Ascending aorta (tissue), 2 donors: ENCODE measurements at regions of chr2 and their contacts with region 1.

Region 1: GRCh38 chr2:33210626-33211025 is 263.9 kb downstream of the LTBP1 start:
- DNase-seq: peak; percentile 35 to 89
- H3K4me3 ChIP-seq: no peak overlapping the region
- H3K27ac ChIP-seq: peak overlapping the region; percentile 87 to 95
- H3K4me1 ChIP-seq: peaks cover 17 to 63% of the 10 kb centered on the region in 2 donors
- H3K27me3 ChIP-seq: no peaks in the 10 kb centered on the region
- CTCF ChIP-seq: no peak

Region 2: GRCh38 chr2:33059471-33060156 is 151.0 kb before region 1 on chr2:
- intact Hi-C with region 1: loop called (anchors 5 kb)
- DNase-seq: no peak
- H3K4me3 ChIP-seq: peak overlapping the region; percentile 45 to 53
- H3K27ac ChIP-seq: peak overlapping the region; percentile 70 to 82
- H3K4me1 ChIP-seq: peaks cover 0 to 6% of the 10 kb centered on the region in 2 donors
- H3K27me3 ChIP-seq: no peaks in the 10 kb centered on the region
- CTCF ChIP-seq: no peak

Region 3: DNA sequence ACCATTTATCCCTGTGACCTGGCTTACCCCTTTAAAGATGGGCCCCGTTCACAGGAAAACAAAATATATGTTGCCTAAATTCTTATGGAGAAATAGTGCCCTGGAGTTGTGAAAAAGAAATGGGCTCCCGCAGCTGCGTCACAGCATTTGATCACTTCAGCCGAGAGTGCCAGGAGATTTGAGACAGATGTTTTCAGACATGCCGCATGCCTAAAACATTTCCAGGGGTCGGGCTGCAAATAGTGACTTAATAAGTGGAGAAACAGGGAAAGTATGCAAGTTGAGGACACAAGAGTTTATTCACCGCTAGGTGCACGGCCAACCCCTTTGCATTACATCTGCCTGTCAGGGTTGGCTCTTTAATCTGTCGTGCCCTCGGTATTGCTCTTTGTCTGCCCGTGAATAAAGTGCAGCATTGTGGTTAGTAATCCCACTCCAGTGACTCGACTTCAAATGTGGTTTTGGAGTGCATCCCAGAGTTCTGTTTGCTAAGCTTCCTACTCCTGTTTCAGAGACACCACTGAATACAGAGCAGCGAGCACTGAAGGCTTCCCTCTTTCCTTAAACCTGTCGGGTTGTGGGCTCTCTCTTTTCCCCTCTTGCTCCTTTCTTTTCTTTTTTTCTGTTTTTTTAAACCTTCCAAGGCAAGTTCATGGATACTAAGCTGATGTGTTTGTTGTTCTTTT is 76.4 kb before region 1 on chr2:
- intact Hi-C with region 1: loop called (anchors 2 kb)
- DNase-seq: peak in 1 of 2 donors; percentile 93
- H3K4me3 ChIP-seq: peak overlapping the region; percentile 62 to 73
- H3K27ac ChIP-seq: peak overlapping the region; percentile 88 to 92
- H3K4me1 ChIP-seq: peaks cover 6 to 38% of the 10 kb centered on the region in 2 donors
- H3K27me3 ChIP-seq: no peaks in the 10 kb centered on the region
- CTCF ChIP-seq: peak in 1 of 3 experiments; percentile 17

Region 4: GRCh38 chr2:33145459-33145858 is 65.2 kb before region 1 on chr2:
- intact Hi-C with region 1: loop called (anchors 5 kb)
- DNase-seq: no peak
- H3K4me3 ChIP-seq: peak overlapping the region in 1 of 2 donors; percentile 40
- H3K27ac ChIP-seq: peak overlapping the region; percentile 83 to 86
- H3K4me1 ChIP-seq: peaks cover 6 to 67% of the 10 kb centered on the region in 2 donors
- H3K27me3 ChIP-seq: no peaks in the 10 kb centered on the region
- CTCF ChIP-seq: no peak